ENCODE measurements at regions of chr3 and their contacts with region 1.

Region 1: GRCh38 chr3:190424478-190425439 is 24.9 kb downstream of the TMEM207 start:
- DNase-seq: peak; percentile 58 to 65
- H3K4me3 ChIP-seq: no peak overlapping the region
- H3K27ac ChIP-seq: no peak overlapping the region
- H3K4me1 ChIP-seq: no peaks in the 10 kb centered on the region
- H3K27me3 ChIP-seq: no peaks in the 10 kb centered on the region
- CTCF ChIP-seq: peak; percentile 42 to 93 (median 68)
- POLR2A ChIP-seq: no peak

Region 2: GRCh38 chr3:190224863-190225692 is 199.7 kb before region 1 on chr3:
- intact Hi-C with region 1: loop called (anchors 5 kb)
- DNase-seq: peak; percentile 11 to 17
- H3K4me3 ChIP-seq: no peak overlapping the region
- H3K27ac ChIP-seq: no peak overlapping the region
- H3K4me1 ChIP-seq: no peaks in the 10 kb centered on the region
- H3K27me3 ChIP-seq: no peaks in the 10 kb centered on the region
- CTCF ChIP-seq: peak in 5 of 6 experiments; percentile 6 to 85 (median 56)
- POLR2A ChIP-seq: no peak

Measured in thyroid gland (tissue), 4 donors.